ENCODE measurements at regions of chr1 and their contacts with region 1.

Region 1: DNA sequence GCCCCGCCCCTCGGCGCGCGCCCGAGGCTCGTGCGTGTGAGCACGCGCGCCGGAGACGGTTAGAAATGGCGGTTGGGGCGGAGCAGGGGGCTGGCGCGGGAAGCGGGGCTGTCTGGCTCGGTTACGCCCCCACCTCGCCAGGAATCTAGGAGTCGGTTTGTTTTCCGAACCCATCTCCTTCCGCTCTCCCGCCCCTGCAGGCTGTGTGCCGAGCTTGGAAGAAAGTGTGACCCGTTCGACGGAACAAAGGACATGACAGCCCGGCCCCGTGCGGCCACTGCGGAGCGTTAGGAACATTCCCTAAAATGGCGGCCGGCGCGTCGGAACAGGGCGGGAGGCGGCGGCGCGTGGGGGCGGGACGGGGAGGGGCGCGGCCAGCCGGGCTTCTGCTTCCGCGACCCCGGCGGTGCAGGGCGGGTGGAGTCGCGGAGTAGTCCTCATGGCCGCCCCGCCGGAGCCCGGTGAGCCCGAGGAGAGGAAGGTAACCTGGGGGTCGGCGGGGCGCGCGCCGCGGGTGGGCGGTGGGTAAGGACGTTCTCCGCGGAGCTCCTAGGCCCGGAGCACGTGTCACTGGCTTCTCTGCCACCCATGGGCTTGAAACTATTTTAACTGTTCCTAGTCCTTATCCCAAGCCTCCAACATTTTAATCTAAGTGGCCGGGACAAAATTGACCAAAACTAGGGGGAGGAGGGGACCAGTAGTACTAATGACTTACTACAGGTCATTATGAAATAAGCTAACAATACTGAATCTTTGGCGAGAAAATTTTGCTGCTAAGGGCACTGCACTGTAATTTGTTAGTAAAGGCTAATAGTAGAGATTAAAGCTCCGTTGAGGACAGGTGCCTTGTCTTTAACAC is at the start of gene COX20:
- DNase-seq: peak; percentile 89 to 96 (median 94)
- H3K4me3 ChIP-seq: peak within 1 kb of the TSS; percentile 74 to 87
- H3K4me3 Mint-ChIP-seq: peak within 1 kb of the TSS; percentile 89 to 98 (median 96)
- H3K27ac ChIP-seq: peak within 1 kb of the TSS; percentile 94
- H3K27ac Mint-ChIP-seq: peak within 1 kb of the TSS; percentile 93 to 100 (median 99)
- H3K4me1 ChIP-seq: peaks cover 52% of the 10 kb centered on the region
- H3K4me1 Mint-ChIP-seq: peaks cover 35 to 67% (median 42%) of the 10 kb centered on the region in 4 donors
- H3K27me3 ChIP-seq: no peaks in the 10 kb centered on the region
- H3K27me3 Mint-ChIP-seq: no peaks in the 10 kb centered on the region
- total RNA-seq, gene COX20: 31.3 to 32.9 TPM

Region 2: DNA sequence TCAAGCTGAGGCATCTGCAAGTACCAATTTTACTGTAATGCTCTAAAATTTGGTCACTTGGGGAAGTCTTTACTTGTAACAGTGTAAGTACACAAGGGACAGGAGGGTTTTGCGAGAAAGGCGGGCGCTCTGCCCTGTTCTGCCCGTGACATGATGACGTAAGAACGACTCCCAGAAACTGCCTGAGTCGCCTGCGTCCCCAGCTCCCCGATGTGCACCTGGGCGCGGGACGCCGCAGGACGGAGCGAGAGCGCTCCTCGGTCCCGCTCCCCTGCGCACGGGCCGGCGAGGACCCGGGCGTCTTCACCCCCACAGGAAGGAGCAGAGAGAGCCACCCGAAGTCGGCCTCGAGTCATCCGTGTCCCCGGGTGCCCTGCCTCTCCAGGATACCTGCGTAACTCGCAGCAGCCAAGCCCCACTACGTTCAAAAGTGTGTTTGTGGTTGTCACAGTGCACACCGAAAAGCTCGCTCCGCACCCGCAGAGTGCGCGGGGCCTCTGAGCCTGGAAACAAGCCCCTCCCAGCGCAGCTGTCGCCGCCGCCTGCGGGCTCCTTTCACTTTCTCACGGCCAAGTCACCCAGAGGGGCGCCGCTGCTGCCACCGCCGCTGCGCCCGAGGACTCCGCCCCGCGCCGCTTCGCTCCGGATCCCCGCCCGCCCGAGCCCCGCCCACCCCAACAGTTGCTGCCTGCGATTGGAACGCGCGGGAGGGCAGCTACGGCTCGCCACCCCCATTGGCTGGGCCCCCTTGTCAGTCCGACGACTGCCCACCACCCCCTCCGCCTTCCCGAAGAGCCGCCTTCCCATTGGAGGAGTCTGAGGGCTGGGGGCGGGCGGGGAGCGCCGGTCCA is 787.7 kb before region 1 on chr1:
- CTCF ChIA-PET with region 1: no interaction called
- POLR2A ChIA-PET with region 1: interaction called, 12 read pairs
- intact Hi-C with region 1: no loop called
- DNase-seq: peak; percentile 93 to 99 (median 97)
- H3K4me3 ChIP-seq: peak overlapping the region; percentile 77 to 99
- H3K4me3 Mint-ChIP-seq: peak overlapping the region; percentile 84 to 98 (median 95)
- H3K27ac ChIP-seq: peak overlapping the region; percentile 94
- H3K27ac Mint-ChIP-seq: peak overlapping the region; percentile 91 to 100 (median 98)
- H3K4me1 ChIP-seq: peaks cover 47% of the 10 kb centered on the region
- H3K4me1 Mint-ChIP-seq: peaks cover 21 to 28% (median 27%) of the 10 kb centered on the region in 4 donors
- H3K27me3 ChIP-seq: no peaks in the 10 kb centered on the region
- H3K27me3 Mint-ChIP-seq: peaks cover 0 to 2% of the 10 kb centered on the region in 2 donors

Region 3: DNA sequence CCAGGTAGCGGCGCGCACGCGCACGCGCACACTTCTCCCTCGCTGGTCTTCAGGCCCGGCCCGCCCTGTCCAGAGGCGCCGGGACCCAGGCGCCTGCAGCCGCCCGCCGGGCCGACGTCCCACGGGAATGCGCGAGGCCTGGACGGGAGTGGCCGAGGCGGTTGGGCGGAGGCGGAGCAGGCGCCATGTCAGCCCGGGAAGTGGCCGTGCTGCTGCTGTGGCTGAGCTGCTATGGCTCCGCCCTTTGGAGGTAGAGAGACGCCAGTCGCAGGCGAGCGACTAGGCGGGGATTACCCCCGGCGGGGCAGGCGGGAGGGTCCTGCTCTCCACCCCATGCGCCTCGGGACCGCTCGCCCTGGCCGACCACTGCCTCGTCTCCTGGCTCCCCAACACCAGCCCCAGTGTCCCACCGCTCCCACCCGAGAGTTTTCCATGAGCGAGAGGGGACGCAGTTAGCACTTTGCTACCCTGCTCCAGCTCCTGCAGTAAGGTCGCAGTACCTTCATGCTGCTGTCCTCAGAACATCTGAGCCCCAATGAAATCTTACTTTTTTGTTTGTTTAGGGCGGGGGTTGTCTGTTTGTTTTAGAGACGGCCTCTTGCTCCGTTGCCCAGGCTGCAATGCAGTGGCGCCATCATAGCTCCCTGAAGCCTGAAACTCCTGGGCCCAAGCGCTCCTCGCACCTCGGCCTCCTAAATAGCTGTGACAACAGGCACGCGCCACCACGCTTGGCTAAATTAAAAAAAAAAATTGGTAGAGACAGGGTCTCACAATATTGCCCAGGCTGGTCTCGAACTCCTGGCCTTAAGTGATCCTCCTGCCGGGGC is 374.0 kb before region 1 on chr1 and contains the start of gene CATSPERE:
- CTCF ChIA-PET with region 1: no interaction called
- POLR2A ChIA-PET with region 1: interaction called, 18 read pairs
- intact Hi-C with region 1: no loop called
- DNase-seq: peak; percentile 72 to 80 (median 77)
- H3K4me3 ChIP-seq: peak within 1 kb of the TSS; percentile 70 to 89
- H3K4me3 Mint-ChIP-seq: peak within 1 kb of the TSS; percentile 78 to 90 (median 84)
- H3K27ac ChIP-seq: peak within 1 kb of the TSS; percentile 70
- H3K27ac Mint-ChIP-seq: peak within 1 kb of the TSS; percentile 62 to 98 (median 88)
- H3K4me1 ChIP-seq: peaks cover 9% of the 10 kb centered on the region
- H3K4me1 Mint-ChIP-seq: peaks cover 7 to 14% (median 11%) of the 10 kb centered on the region in 4 donors
- H3K27me3 ChIP-seq: no peaks in the 10 kb centered on the region
- H3K27me3 Mint-ChIP-seq: no peaks in the 10 kb centered on the region
- total RNA-seq, gene CATSPERE: 1.4 to 2.3 TPM

Region 4: DNA sequence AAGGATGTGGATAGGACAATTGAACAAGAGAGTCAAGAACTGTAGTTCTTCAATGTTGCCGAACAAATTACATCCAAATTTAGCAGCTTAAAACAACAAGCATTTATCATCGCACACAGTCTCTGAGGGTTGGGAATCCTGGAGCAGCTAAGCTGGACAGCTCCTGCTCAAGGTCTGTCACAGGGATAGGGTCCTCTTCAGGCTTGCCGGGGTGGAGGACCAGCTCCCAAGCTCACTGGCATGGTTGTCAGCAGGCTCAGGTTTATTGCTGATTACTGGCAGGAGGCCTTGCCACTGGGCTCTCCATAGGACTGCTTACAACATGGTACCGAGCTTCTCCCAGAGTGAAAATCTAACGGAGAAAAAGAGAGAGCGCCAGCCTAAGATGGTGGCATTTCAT is 22.2 kb before region 1 on chr1:
- CTCF ChIA-PET with region 1: no interaction called
- POLR2A ChIA-PET with region 1: no interaction called
- intact Hi-C with region 1: no loop called
- DNase-seq: no peak
- H3K4me3 ChIP-seq: no peak overlapping the region
- H3K4me3 Mint-ChIP-seq: no peak overlapping the region
- H3K27ac ChIP-seq: no peak overlapping the region
- H3K27ac Mint-ChIP-seq: no peak overlapping the region
- H3K4me1 ChIP-seq: no peaks in the 10 kb centered on the region
- H3K4me1 Mint-ChIP-seq: no peaks in the 10 kb centered on the region
- H3K27me3 ChIP-seq: peaks cover 3% of the 10 kb centered on the region
- H3K27me3 Mint-ChIP-seq: peaks cover 17% of the 10 kb centered on the region in 2 donors

Region 5: DNA sequence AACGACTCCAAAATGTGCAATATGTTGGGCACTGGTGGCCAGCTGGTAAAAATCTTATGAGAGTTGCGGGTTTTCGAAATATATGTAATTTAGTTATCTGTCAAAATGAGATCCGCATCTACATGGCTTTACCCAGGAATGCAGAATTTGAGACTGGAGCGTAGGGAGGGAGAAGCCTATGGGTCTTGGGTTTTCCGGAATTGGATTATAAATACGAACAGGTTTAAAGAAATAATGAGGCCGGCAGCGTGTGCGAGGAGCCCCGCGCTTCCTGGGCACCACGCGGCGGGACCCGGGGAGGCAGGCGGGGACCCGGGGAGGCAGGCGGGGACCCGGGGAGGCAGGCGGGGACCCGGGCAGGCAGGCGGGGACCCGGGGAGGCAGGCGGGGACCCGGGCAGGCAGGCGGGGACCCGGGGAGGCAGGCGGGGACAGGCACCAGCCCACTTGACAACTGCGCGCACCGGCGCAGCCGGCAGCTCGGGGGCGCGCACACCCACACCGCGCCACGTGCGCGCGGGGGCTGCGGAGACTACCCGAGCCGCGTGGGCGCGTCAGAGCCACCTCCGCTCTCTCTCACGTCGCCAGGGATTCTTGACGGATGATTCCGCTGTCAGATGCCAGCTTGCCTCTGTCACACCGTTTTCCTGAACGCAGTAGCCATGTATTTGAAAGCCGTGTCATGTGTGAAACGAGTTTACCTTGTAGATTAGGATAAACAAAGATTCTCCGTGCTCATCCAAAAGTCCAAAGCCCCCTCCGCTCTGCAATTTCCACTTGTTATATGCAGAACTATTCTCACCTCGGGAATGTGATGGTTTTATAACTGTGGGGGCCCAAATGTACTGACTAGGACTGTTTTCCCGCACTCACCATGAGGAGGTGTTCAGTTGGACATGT is 83.2 kb after region 1 on chr1:
- CTCF ChIA-PET with region 1: interaction called, 3 read pairs
- POLR2A ChIA-PET with region 1: interaction called, 24 read pairs
- intact Hi-C with region 1: loop called (anchors 1 kb)
- DNase-seq: peak; percentile 54 to 79 (median 78)
- H3K4me3 ChIP-seq: peak overlapping the region; percentile 36 to 64
- H3K4me3 Mint-ChIP-seq: peak overlapping the region; percentile 78 to 94 (median 91)
- H3K27ac ChIP-seq: no peak overlapping the region
- H3K27ac Mint-ChIP-seq: peak overlapping the region; percentile 54 to 91 (median 85)
- H3K4me1 ChIP-seq: peaks cover 7% of the 10 kb centered on the region
- H3K4me1 Mint-ChIP-seq: peaks cover 4 to 16% (median 11%) of the 10 kb centered on the region in 4 donors
- H3K27me3 ChIP-seq: no peaks in the 10 kb centered on the region
- H3K27me3 Mint-ChIP-seq: peaks cover 4 to 7% of the 10 kb centered on the region in 2 donors

Region 6: DNA sequence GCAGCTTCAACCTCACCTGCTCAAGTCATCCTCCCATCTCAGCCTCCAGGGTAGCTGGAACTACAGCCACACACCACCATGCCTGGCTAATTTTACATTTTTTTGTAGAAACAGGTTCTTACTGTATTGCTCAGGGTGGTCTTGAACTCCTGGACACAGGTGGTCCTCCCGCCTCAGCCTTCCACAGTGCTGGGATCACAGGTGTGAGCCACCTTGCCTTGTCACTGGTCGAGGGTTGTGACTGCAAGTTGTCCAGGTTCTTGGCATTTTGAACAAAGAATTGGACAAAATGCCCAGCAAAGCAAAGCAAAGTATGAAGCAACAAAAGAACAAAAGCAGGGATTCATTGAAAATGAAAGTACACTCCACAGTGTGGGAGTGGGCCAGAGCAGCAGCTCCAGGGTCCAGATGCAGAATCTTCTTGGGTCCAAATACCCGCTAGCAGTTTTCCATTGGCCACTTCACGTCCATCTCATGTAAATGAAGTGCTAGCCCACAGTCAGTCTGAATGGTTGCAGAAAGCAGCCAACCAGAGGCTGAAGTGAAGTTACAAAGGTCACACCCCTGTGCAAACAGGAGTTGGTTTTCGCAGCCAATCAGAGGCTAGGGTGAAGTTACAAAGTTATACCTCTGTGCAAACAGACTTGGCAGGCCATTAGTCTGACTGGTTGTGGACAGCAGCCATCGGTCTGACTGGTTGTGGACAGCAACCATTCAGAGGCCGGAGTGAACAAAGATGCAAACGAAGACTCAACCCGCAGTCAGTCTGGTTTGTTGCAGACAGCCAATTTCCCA is 209.8 kb after region 1 on chr1:
- CTCF ChIA-PET with region 1: interaction called, 16 read pairs
- POLR2A ChIA-PET with region 1: interaction called, 13 read pairs
- intact Hi-C with region 1: loop called (anchors 1 kb)
- DNase-seq: no peak
- H3K4me3 ChIP-seq: no peak overlapping the region
- H3K4me3 Mint-ChIP-seq: no peak overlapping the region
- H3K27ac ChIP-seq: no peak overlapping the region
- H3K27ac Mint-ChIP-seq: peak overlapping the region in 1 of 7 donors; percentile 31
- H3K4me1 ChIP-seq: no peaks in the 10 kb centered on the region
- H3K4me1 Mint-ChIP-seq: peaks cover 0 to 3% (median under 1%) of the 10 kb centered on the region in 4 donors
- H3K27me3 ChIP-seq: no peaks in the 10 kb centered on the region
- H3K27me3 Mint-ChIP-seq: peaks cover 0 to 1% of the 10 kb centered on the region in 2 donors